Activated naive CD8-positive, alpha-beta T cell treated with anti-CD3 and anti-CD28 coated beads, Interleukin-2, amount 10 ng/mL, durations not matched to agents 7 days and 5 days (primary cell): ENCODE measurements at regions of chr7 and their contacts with region 1.

Region 1: DNA sequence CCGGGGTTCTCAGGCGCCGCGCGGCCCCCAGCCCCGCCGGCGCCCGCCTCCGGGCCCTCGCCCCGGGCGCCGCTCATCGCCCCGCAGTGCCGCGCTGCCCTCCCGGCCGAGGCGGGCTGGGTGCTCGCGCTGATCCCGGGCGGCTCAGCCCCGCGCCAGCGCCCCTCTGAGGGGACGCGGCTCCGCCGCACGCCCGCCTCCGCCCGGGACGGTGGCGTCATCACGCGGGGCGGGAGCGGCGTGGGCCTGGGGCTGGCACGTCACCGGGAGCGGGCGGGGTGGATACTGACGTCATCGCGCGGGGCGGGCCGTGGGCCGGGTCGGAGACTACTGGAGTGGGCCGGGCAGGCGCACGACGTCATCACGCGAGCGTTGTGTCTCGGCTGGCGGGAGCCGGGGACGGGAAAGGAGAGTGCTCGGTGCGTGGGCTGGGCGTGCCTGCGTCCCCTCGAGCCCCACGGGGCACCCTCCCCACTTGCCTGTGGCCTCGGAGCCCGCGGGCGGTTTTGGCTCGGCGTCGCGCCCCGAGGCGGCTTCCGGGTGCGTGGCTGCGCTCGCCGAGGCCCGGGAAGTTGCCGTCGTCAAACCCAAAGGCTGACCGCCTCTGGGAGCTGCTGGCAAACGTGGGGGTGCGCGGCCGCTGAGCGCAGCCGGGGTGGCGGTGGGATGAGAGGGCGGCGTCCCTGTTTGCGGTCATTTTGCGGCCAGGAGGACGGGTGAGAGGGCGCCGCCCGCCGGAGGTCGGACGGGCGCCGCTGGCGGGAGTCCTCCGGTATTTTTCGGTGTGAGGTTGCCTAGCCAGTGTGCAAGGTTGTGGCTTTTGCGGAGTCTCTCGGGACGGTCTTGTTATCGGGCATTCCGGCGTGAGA is at the start of gene ESYT2:
- DNase-seq: peak; percentile 100
- ATAC-seq: peak; percentile 87
- H3K4me3 Mint-ChIP-seq: peak within 1 kb of the TSS; percentile 99
- H3K27ac Mint-ChIP-seq: peak within 1 kb of the TSS; percentile 86
- H3K4me1 Mint-ChIP-seq: peaks cover 20% of the 10 kb centered on the region
- H3K27me3 Mint-ChIP-seq: peaks cover 6% of the 10 kb centered on the region
- total RNA-seq, gene ESYT2: 93.9 to 94.2 TPM

Region 2: GRCh38 chr7:158811461-158811860 is 18.1 kb before region 1 on chr7:
- POLR2A ChIA-PET with region 1: interaction called, 30 read pairs
- DNase-seq: no peak
- ATAC-seq: peak; percentile 7
- H3K4me3 Mint-ChIP-seq: peak overlapping the region; percentile 74
- H3K27ac Mint-ChIP-seq: peak overlapping the region; percentile 91
- H3K4me1 Mint-ChIP-seq: peaks cover 65% of the 10 kb centered on the region
- H3K27me3 Mint-ChIP-seq: no peaks in the 10 kb centered on the region

Region 3: DNA sequence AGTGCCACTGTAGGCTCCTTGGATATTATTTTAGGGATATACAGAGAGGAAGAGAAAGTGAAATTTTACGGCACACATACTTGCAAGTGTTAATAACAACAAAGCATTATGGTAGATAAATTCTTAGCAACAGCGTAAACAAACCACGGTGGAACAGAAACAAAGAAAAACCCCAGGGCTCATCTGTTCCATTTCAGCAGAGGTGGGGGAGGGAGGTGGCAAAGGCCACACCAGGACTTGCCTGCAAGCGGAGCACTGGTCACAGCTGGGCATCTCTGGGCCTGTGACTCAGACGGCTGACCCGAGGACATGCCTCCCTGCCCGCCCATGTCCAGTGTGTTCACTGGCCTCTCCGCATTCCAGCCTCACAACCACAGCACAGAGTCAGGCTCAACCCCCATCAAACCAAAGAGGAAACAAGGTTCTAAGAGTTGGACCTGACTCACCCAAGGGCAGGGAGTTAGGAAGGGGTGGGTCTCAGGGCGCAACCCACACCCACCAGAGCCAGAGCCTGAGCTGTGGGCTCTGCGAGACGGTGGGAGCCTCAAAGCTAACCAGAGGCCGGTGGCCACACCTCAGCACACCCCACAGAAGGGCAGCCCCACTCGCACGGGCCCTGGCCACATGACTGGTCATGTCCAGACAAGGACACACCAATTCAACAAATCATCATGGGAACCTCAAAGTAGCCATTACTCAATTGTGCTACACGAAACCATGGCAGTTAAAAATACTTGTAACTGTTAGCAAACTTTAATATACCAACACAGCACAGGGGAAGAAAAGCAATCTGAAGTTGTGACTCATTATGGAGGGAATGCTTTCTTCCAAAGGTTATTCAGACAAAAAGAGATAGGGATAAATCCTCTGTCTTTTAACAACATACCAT is 11.0 kb before region 1 on chr7:
- POLR2A ChIA-PET with region 1: interaction called, 30 read pairs
- DNase-seq: peak; percentile 75
- ATAC-seq: peak; percentile 60
- H3K4me3 Mint-ChIP-seq: peak overlapping the region; percentile 85
- H3K27ac Mint-ChIP-seq: peak overlapping the region; percentile 96
- H3K4me1 Mint-ChIP-seq: peaks cover 71% of the 10 kb centered on the region
- H3K27me3 Mint-ChIP-seq: no peaks in the 10 kb centered on the region

Region 4: GRCh38 chr7:158847451-158847866 is 17.9 kb after region 1 on chr7:
- POLR2A ChIA-PET with region 1: interaction called, 14 read pairs
- DNase-seq: no peak
- ATAC-seq: peak; percentile 85
- H3K4me3 Mint-ChIP-seq: peak overlapping the region; percentile 87
- H3K27ac Mint-ChIP-seq: peak overlapping the region; percentile 97
- H3K4me1 Mint-ChIP-seq: peaks cover 32% of the 10 kb centered on the region
- H3K27me3 Mint-ChIP-seq: no peaks in the 10 kb centered on the region